ENCODE measurements at regions of chr17 and their contacts with region 1.

Region 1: GRCh38 chr17:5592382-5592781 is 8.1 kb upstream of the NLRP1 start:
- DNase-seq: no peak
- ATAC-seq: peak in 1 of 2 donors; percentile 42

Region 2: GRCh38 chr17:5304636-5305035 is 287.7 kb before region 1 on chr17:
- intact Hi-C with region 1: no loop called
- DNase-seq: no peak
- ATAC-seq: no peak

Region 3: GRCh38 chr17:5715478-5715877 is 123.1 kb after region 1 on chr17:
- intact Hi-C with region 1: loop called in 1 of 2 experiments (anchors 10 kb)
- DNase-seq: no peak
- ATAC-seq: no peak

Region 4: DNA sequence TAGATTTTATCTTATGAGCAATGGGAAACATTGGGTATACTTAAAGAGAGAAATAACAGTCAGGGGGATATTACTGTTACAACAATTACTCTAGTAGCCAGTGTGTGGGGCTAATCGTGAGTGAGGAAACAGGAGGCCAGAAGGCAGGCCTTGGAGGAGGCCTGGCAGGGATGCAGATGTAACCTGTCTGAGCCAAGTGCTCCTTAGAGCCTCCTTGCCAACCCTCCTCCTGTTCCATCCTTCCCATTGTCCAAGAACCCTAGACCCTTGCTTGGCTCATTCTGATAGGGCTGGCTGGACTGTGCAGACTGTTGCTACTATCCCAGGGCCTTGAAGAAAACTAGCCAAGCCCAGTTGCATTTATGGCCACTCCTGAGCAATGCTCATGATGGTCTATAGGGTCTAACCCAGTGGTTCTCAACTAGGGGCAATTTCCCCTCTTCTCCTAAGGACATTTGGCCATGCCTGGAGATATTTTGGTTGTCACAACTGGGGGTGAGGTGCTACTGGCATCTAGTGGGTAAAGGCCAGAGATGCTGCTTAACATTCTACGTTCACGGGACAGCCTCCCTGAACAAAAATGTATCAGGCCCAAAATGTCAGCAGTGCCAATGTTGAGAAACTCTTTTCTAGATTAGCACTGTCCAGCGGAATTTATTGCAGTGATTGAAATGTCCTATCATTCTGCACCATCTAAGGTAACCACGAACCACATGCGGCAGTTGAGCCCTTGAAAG is 453.4 kb after region 1 on chr17:
- intact Hi-C with region 1: loop called (anchors 5 to 10 kb)
- DNase-seq: no peak
- ATAC-seq: no peak

Measured in left cardiac atrium (tissue), 4 donors.